Activated T-helper 1 cell treated with anti-CD3 and anti-CD28 coated beads, Interleukin-12 subunit alpha, Interleukin-12 subunit beta, Interleukin-2, Interleukin-4 antibody, amounts not matched to agents 30 ng/mL and 10 ng/mL and 1 ng/mL, durations not matched to agents 14 hours and 24 hours and 36 hours (primary cell): ENCODE measurements at regions of chrX and their contacts with region 1.

Region 1: GRCh38 chrX:132292793-132293192 is 73.5 kb upstream of the RAP2C start:
- DNase-seq: peak; percentile 0
- H3K4me3 Mint-ChIP-seq: no peak overlapping the region
- H3K27ac Mint-ChIP-seq: no peak overlapping the region
- H3K4me1 Mint-ChIP-seq: no peaks in the 10 kb centered on the region
- H3K27me3 Mint-ChIP-seq: no peaks in the 10 kb centered on the region

Region 2: DNA sequence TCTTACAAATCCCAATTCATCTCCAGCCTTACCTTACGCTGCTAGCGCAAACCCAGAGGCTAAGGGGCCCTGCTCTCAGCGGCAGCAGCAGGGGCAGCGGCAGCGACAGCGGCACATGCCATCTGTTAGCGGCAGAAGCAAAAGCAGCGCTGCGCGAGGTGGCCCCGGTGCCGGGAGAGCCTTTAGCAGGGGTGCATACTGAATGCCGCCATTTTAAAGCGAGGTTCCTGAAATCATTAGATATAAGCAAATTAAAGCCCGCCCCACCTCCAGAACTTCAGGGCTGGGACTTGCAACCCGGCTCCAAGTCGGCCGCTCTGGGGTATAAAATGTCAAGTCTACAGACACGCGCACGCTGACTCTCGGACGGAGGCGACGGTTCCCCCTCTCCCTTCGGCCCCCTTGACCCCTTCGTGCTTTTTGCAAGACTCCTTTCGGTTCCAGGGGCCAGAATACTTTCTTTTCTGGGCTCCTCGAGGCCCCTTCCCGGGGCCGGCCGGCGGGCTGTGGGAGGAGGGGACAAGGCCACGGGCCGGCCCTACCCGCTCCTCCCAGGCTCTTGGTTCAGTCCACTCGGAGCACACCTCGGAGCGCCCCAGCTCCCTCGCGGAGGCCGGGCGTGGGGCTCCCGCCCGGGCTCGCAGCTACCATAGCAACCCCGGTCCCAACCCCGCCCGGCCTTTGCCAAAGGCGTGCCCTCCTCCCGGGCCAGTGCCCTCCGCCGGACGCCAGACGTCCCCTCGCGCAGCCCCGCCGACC is 196.2 kb after region 1 on chrX and contains the start of gene MBNL3:
- intact Hi-C with region 1: loop called (anchors 10 kb)
- DNase-seq: peak; percentile 45
- H3K4me3 Mint-ChIP-seq: peak within 1 kb of the TSS; percentile 95
- H3K27ac Mint-ChIP-seq: peak within 1 kb of the TSS; percentile 94
- H3K4me1 Mint-ChIP-seq: peaks cover 28% of the 10 kb centered on the region
- H3K27me3 Mint-ChIP-seq: peaks cover 7% of the 10 kb centered on the region
- total RNA-seq, gene MBNL3: 8.9 and 12.3 TPM in 2 replicates